MCF 10A (cell line): ENCODE measurements at regions of chr4 and their contacts with region 1.

Region 1: GRCh38 chr4:101367201-101367600 is 19.9 kb upstream of the PPP3CA start:
- DNase-seq: peak; percentile 16
- H3K4me3 Mint-ChIP-seq: no peak overlapping the region
- H3K27ac Mint-ChIP-seq: peak overlapping the region; percentile 85
- H3K4me1 Mint-ChIP-seq: peaks cover 18% of the 10 kb centered on the region
- H3K27me3 Mint-ChIP-seq: no peaks in the 10 kb centered on the region
- CTCF ChIP-seq: no peak

Region 2: GRCh38 chr4:101356928-101357327 is 10.3 kb before region 1 on chr4:
- CTCF ChIA-PET with region 1: no interaction called
- POLR2A ChIA-PET with region 1: interaction called, 10 read pairs
- intact Hi-C with region 1: no loop called
- DNase-seq: peak; percentile 86
- H3K4me3 Mint-ChIP-seq: peak overlapping the region; percentile 24
- H3K27ac Mint-ChIP-seq: peak overlapping the region; percentile 87
- H3K4me1 Mint-ChIP-seq: peaks cover 36% of the 10 kb centered on the region
- H3K27me3 Mint-ChIP-seq: no peaks in the 10 kb centered on the region
- CTCF ChIP-seq: no peak